ENCODE measurements at regions of chr15 and their contacts with region 1.

Region 1: GRCh38 chr15:70810916-70811578 is 42.9 kb downstream of the LARP6 start:
- DNase-seq: peak in 1 of 2 donors; percentile 79
- H3K4me3 ChIP-seq: no peak overlapping the region
- CTCF ChIP-seq: no peak
- POLR2A ChIP-seq: no peak

Region 2: GRCh38 chr15:70679919-70680231 is 131.2 kb before region 1 on chr15:
- intact Hi-C with region 1: loop called (anchors 5 kb)
- DNase-seq: no peak
- H3K4me3 ChIP-seq: no peak overlapping the region
- CTCF ChIP-seq: no peak
- POLR2A ChIP-seq: no peak

Region 3: DNA sequence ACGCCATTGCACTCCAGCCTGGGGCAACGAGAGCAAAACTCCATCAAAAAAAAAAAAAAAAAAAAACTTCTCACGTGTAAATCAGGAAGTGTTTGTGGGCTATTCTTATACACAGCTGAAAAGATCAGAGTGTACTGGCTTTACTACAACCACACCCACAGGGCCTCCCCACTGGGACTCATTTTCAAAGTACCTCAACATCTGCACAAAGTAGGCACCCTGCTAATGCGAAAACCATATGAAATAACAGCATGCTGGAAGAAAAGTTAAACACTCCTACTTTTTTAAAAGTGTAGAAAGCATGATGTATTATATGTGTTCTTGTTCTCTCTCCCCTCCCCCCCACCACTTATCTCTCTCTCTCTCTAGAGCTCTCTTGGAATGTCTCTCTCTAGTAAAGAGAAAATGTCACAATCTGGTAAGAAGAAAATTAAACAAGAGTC is 58.8 kb before region 1 on chr15:
- intact Hi-C with region 1: no loop called
- DNase-seq: peak; percentile 67 to 87
- H3K4me3 ChIP-seq: no peak overlapping the region
- CTCF ChIP-seq: no peak
- POLR2A ChIP-seq: no peak

Measured in lower leg skin (tissue), 4 donors.